Gastrocnemius medialis (tissue), 4 donors: ENCODE measurements at regions of chr10 and their contacts with region 1.

Region 1: GRCh38 chr10:119608316-119609155 is 11.8 kb upstream of the TIAL1 start:
- DNase-seq: peak; percentile 12 to 49
- ATAC-seq: peak; percentile 82 to 97
- H3K4me3 ChIP-seq: peak overlapping the region in 1 of 4 donors; percentile 12
- H3K27ac ChIP-seq: no peak overlapping the region
- H3K4me1 ChIP-seq: peaks cover 0 to 6% of the 10 kb centered on the region in 2 donors
- H3K27me3 ChIP-seq: no peaks in the 10 kb centered on the region
- CTCF ChIP-seq: peak; percentile 37 to 82 (median 64)
- POLR2A ChIP-seq: no peak

Region 2: GRCh38 chr10:119725828-119726675 is 117.5 kb after region 1 on chr10 and contains the start of gene INPP5F:
- in situ Hi-C with region 1: loop called in 2 of 4 experiments (anchors 25 kb)
- intact Hi-C with region 1: no loop called
- DNase-seq: peak; percentile 99
- ATAC-seq: peak; percentile 94 to 96
- H3K4me3 ChIP-seq: peak within 1 kb of the TSS; percentile 74 to 93 (median 82)
- H3K27ac ChIP-seq: peak within 1 kb of the TSS; percentile 92 to 96 (median 94)
- H3K4me1 ChIP-seq: peaks cover 18 to 26% of the 10 kb centered on the region in 2 donors
- H3K27me3 ChIP-seq: no peaks in the 10 kb centered on the region
- CTCF ChIP-seq: peak; percentile 28 to 56 (median 41)
- POLR2A ChIP-seq: peak; percentile 75 to 77
- total RNA-seq, gene INPP5F: 8.7 to 11.6 (median 10.5) TPM

Region 3: DNA sequence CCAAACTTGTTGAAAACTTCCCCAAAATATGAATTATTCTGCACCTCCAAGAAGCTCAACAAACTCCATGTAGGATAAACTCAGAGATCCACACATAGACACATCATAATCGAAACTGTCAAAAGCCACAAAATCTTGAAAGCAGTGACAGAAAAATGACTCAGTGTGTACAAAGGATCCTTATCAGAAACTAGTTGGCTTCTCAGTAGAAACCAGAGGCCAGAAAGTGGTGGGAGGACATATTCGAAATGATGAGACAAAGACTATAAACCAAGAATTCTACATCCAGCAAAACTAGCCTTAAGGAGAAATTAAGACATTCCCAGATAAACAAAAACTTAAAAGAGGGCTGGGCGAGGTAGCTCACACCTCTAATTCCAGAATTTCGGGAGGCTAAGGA is 225.7 kb after region 1 on chr10:
- in situ Hi-C with region 1: no loop called
- intact Hi-C with region 1: no loop called
- DNase-seq: no peak
- ATAC-seq: no peak
- H3K4me3 ChIP-seq: no peak overlapping the region
- H3K27ac ChIP-seq: no peak overlapping the region
- H3K4me1 ChIP-seq: no peaks in the 10 kb centered on the region
- H3K27me3 ChIP-seq: no peaks in the 10 kb centered on the region
- CTCF ChIP-seq: no peak
- POLR2A ChIP-seq: no peak

Region 4: GRCh38 chr10:119859420-119860258 is 251.1 kb after region 1 on chr10:
- in situ Hi-C with region 1: loop called (anchors 10 to 25 kb)
- intact Hi-C with region 1: loop called (anchors 2 kb)
- DNase-seq: no peak
- ATAC-seq: no peak
- H3K4me3 ChIP-seq: no peak overlapping the region
- H3K27ac ChIP-seq: no peak overlapping the region
- H3K4me1 ChIP-seq: peaks cover 7 to 10% of the 10 kb centered on the region in 2 donors
- H3K27me3 ChIP-seq: no peaks in the 10 kb centered on the region
- CTCF ChIP-seq: peak; percentile 41 to 71 (median 59)
- POLR2A ChIP-seq: no peak

Region 5: DNA sequence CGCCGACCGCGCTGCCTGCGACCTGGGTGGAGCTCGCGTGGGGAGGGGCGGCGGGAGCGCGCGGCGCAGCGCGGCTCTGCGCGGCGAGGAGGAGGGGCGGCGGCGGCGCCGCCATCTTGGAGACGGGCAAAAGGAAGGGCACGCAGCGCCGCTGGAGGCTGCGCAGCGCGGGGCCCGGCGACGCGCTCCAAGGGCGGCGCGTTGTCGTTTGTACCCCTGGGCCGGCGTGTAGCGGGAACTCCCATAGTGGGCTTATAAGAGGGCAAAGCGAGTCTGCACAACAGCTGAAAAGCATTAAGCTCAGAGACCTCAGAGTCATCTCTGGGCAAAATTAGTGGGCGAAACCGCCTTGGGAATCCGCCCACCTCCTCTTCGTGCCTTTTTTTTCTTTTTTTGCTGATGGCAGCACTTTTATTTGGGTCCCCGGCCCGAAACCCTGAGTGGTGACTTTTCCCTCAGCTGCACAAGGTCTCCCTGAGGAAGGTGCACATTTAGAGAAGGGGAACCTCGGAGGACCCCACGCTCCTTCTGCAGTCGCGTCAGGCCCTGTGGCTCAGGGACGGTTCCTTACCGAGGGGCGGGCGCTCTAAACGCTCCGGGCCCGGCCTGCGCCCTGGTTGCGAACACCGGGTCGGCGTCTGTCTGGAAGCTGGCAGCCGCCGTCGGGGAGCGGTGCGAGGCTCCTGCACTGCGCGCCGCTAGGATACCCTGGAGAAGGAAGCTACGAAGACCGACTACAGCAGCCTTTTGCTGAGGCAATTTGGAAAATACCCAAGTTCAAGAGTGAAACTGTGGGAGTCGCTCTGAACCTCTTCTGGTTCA is 264.5 kb after region 1 on chr10:
- in situ Hi-C with region 1: loop called in 3 of 4 experiments (anchors 10 to 25 kb)
- intact Hi-C with region 1: no loop called
- DNase-seq: peak; percentile 71 to 81
- ATAC-seq: peak; percentile 92 to 93
- H3K4me3 ChIP-seq: peak overlapping the region; percentile 85 to 96 (median 90)
- H3K27ac ChIP-seq: peak overlapping the region; percentile 89 to 97 (median 92)
- H3K4me1 ChIP-seq: peaks cover 17 to 28% of the 10 kb centered on the region in 2 donors
- H3K27me3 ChIP-seq: no peaks in the 10 kb centered on the region
- CTCF ChIP-seq: peak in 1 of 5 experiments; percentile 2
- POLR2A ChIP-seq: peak in 1 of 2 donors; percentile 42

Region 6: DNA sequence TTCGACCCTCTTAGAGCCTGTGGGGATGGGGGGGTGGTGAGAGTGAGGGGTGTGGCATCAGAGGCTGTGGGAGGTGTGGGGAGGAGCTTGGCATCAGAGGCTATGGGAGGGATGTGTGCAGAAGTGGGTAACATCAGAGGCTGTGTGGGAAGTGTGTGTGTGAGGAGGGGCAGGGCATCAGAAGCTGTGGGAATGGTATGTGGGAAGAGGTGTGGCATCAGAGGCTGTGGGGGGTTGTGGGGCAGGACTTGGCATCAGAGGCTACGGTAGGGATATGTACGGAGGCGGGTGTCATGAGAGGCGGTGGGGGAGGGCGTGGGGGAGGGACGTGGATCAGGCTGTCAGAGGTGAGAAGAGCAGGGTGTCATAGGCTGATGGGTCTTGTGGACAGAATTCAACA is 381.4 kb after region 1 on chr10:
- in situ Hi-C with region 1: no loop called
- intact Hi-C with region 1: no loop called
- DNase-seq: no peak
- ATAC-seq: no peak
- H3K4me3 ChIP-seq: no peak overlapping the region
- H3K27ac ChIP-seq: no peak overlapping the region
- H3K4me1 ChIP-seq: no peaks in the 10 kb centered on the region
- H3K27me3 ChIP-seq: no peaks in the 10 kb centered on the region
- CTCF ChIP-seq: no peak
- POLR2A ChIP-seq: no peak